ENCODE measurements at regions of chr2 and their contacts with region 1.

Region 1: DNA sequence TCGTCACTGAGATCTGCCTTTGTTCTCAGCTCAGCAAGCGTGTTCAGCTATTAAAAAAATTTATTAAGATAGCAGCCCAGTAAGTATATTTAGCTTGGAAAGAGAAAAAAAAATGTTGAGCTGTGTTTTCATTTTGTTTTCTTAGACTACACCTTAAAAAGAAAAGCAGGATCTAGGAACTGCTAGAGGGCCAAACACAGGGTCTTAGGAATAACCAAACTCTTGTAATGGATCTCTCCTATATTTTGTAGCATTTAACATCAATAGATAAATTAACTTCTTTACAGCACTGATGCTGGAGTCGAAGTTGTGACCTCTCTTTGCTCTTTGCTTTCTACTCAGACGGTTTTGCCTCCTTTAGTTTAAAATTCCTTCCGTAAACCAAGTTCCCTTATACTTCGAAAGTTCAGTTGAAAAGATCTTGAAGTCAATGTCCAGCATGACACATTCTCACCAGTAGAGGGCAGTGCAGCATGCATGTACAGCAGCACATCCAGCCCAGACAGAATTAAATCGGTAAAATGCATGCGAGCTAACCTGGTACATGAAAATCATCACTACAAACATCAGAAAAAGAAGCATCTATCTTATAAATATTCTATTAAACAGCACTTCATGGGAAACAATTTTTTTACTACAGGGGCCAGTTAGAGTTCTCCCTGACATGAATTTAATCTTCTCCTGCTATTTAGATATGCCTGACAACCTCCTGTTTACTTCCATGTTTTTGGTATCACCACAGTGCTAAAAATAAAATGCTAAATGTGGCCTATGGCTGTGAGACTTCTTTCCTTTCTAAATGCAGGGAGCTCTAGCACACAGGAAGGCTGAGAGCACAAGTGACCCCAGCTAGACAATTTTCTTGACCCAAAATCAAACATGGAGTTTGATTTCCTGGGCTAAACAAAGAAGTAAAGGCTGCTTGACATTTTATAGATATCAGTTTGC is 48.2 kb upstream of the MAP3K20 start:
- DNase-seq: peak; percentile 79
- ATAC-seq: peak; percentile 85
- H3K4me3 ChIP-seq: no peak overlapping the region
- H3K27ac ChIP-seq: no peak overlapping the region
- H3K4me1 ChIP-seq: no peaks in the 10 kb centered on the region
- H3K27me3 ChIP-seq: peaks cover 2 to 12% of the 10 kb centered on the region in 2 experiments; a peak in 3 of 5 replicates
- CTCF ChIP-seq: peak; percentile 95
- EP300 ChIP-seq: no peak
- POLR2A ChIP-seq: no peak
- RAD21 ChIP-seq: peak; percentile 91

Region 2: GRCh38 chr2:173075781-173076580 is 48.5 kb after region 1 on chr2 and contains the start of gene MAP3K20:
- CTCF ChIA-PET with region 1: interaction called, 5 read pairs
- POLR2A ChIA-PET with region 1: no interaction called
- in situ Hi-C with region 1: no loop called
- intact Hi-C with region 1: loop called (anchors 2 kb)
- DNase-seq: peak; percentile 38
- ATAC-seq: peak; percentile 91
- H3K4me3 ChIP-seq: peak within 1 kb of the TSS; percentile 70 to 91 (median 80)
- H3K27ac ChIP-seq: peak within 1 kb of the TSS; percentile 45
- H3K4me1 ChIP-seq: peaks cover 23% of the 10 kb centered on the region
- H3K27me3 ChIP-seq: peaks cover 0 to 21% of the 10 kb centered on the region in 2 experiments; a peak in 3 of 5 replicates
- CTCF ChIP-seq: peak; percentile 74
- EP300 ChIP-seq: no peak
- POLR2A ChIP-seq: peak; percentile 30 to 62; a peak in 3 of 4 replicates
- RAD21 ChIP-seq: peak; percentile 48; the same call in 1 of the 2 replicates
- total RNA-seq, gene MAP3K20: 13.5 and 19.8 TPM in 2 replicates

Region 3: DNA sequence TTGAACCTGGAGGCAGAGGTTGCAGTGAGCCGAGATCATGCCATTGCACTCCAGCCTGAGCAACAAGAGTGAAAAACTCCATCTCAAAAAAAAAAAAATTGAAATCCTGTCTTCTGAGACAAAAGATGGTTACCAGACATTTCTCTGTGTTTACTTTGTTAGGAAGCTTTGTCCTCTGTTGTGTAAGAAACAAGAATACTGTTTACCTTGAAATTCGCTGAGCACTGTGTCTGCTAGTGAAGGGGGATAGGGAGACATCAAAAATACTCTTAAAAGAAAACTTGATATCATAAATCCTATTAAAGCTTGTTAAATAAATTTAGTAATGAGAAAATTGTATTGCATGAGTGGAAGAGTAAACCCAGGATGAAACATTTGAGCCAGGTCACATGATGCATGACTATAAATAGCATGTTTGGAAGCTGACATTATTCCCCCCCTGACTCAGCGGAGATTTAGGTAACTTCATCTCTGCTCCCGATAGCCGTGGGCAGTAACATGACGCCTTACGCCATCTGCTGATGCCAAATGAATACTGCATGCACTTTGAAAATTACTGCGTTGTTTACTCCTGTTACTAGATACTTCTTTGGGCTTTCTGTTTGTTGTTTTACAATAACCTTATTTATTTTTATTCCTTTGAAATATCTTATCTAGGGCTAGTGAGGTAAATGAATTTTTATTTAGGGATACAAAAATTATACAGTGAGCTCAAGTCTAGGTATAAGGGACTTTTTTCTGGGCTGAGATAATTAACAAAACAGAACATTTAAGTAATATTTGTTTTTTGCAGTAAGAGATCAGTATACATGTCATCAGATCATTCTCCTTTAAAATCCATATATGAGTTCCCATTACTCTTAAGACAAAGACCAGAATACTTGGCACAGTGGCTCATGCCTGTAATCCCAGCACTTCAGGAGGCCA is 183.1 kb after region 1 on chr2:
- CTCF ChIA-PET with region 1: interaction called, 127 read pairs
- POLR2A ChIA-PET with region 1: interaction called, 3 read pairs
- in situ Hi-C with region 1: loop called (anchors 5 kb)
- intact Hi-C with region 1: loop called (anchors 1 kb)
- DNase-seq: peak; percentile 66
- ATAC-seq: peak; percentile 89
- H3K4me3 ChIP-seq: no peak overlapping the region
- H3K27ac ChIP-seq: no peak overlapping the region
- H3K4me1 ChIP-seq: no peaks in the 10 kb centered on the region
- H3K27me3 ChIP-seq: no peaks in the 10 kb centered on the region
- CTCF ChIP-seq: peak; percentile 91
- EP300 ChIP-seq: peak in 1 of 2 experiments; percentile 15; a peak in 1 of 4 replicates
- POLR2A ChIP-seq: no peak
- RAD21 ChIP-seq: peak; percentile 88

Region 4: DNA sequence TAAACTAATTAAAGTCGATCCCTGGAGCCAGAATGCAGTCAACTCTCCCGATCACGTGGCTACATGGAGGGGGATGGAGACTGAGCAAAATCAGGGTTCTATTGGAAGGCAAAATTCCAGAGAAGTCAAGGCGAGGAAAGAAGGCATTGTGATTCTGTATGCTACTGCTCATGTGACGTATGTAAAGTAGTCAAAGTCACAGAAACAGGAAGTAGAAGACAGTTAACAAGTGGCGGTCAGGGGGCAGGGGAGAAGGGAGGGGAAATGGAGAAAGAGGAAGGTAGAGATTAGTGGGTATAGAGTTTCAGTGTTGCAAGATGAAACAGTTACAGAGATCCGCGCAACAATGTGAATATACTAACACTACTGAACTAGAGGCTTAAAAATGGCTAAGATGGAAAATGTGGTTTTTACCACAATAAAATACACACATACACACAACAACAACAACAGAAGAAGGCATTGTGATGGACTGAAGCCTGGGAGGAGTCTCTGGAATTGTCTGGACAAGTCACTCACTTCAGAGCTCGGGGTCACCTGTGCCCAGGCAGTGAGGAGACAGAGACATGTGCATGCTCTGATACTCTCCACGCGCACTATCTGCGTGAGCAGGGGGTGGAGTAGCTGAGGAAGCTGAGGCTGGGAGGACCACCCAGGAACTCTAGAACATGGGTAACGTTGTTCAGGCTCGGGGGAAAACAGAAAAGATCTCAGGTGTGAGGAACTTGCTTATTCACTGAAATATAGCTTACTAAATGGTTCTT is 237.3 kb after region 1 on chr2:
- CTCF ChIA-PET with region 1: no interaction called
- POLR2A ChIA-PET with region 1: no interaction called
- in situ Hi-C with region 1: no loop called
- intact Hi-C with region 1: loop called (anchors 5 kb)
- DNase-seq: no peak
- ATAC-seq: no peak
- H3K4me3 ChIP-seq: no peak overlapping the region
- H3K27ac ChIP-seq: no peak overlapping the region
- H3K4me1 ChIP-seq: no peaks in the 10 kb centered on the region
- H3K27me3 ChIP-seq: no peaks in the 10 kb centered on the region
- CTCF ChIP-seq: no peak
- EP300 ChIP-seq: no peak
- POLR2A ChIP-seq: no peak
- RAD21 ChIP-seq: no peak

Region 5: DNA sequence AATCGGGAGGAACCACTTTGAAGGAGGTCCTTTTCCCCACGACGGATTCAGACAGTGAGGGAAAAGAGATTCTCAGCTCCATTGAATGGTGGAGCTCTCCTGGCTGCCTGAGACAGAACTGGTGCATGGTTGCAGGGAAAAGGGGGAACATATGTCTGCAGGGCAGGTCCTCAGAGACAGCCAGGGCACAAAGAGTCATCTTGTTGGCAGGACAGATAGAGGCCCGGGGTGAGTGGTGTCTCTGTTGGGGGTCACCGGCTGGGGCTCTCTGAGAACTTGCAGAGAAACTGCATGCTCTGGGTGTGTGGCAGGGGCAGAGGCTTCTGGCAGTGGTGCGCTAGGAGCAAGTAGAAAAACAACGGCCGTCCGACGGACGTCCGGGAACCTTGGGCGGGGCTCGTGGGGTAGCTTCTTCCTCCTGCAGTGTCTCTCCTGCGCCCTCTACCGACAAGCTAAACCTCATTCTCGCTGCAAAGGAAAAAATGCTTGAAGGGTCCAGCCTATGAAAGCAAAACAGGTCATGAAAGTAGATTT is 421.6 kb after region 1 on chr2:
- CTCF ChIA-PET with region 1: interaction called, 4 read pairs
- POLR2A ChIA-PET with region 1: interaction called, 3 read pairs
- in situ Hi-C with region 1: no loop called
- intact Hi-C with region 1: loop called (anchors 1 kb)
- DNase-seq: peak; percentile 87
- ATAC-seq: peak; percentile 98
- H3K4me3 ChIP-seq: peak overlapping the region; percentile 45 to 70 (median 50); a peak in 5 of 6 replicates
- H3K27ac ChIP-seq: no peak overlapping the region
- H3K4me1 ChIP-seq: 0 out of 2 replicates have a peak, but pooled peaks cover 4% of the 10 kb centered on the region
- H3K27me3 ChIP-seq: peaks cover 0 to 19% of the 10 kb centered on the region in 2 experiments; a peak in 3 of 5 replicates
- CTCF ChIP-seq: peak; percentile 87
- EP300 ChIP-seq: no peak
- POLR2A ChIP-seq: peak in 1 of 2 experiments; percentile 55; a peak in 1 of 4 replicates
- RAD21 ChIP-seq: peak; percentile 73